Dorsolateral prefrontal cortex (tissue), 120 donors: ENCODE measurements at regions of chr17 and their contacts with region 1.

Region 1: DNA sequence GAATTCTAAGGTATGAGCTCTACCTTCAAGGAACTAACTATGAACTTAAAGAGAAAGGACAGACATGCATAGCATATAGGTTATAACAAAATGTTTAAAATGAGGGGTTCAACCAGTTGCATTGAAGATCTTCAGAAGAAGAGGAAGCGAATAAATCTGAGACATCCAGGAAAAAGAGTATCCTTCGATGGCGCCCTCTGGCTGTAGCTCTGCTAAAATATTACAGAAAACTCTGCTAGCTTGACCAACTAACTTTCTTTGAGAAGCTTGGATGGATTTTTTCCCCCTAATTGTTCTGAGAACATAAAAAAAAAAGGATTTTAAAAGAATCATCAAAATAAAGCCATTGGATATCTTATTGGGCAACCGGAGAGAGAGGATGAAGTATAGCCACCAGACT is 659.9 kb upstream of the SOX9 start:
- DNase-seq: peak in 4 of 10 donors; percentile 5 to 41 (median 27)
- H3K4me3 ChIP-seq: no peak overlapping the region
- H3K27ac ChIP-seq: no peak overlapping the region
- H3K27me3 ChIP-seq: no peaks in the 10 kb centered on the region
- CTCF ChIP-seq: peak in 55 of 56 donors; percentile 29 to 74 (median 52)

Region 2: GRCh38 chr17:71237903-71238538 is 222.9 kb before region 1 on chr17:
- intact Hi-C with region 1: loop called in 1 of 2 experiments (anchors 5 kb)
- DNase-seq: no peak
- H3K4me3 ChIP-seq: no peak overlapping the region
- H3K27ac ChIP-seq: no peak overlapping the region
- H3K27me3 ChIP-seq: no peaks in the 10 kb centered on the region
- CTCF ChIP-seq: peak in 54 of 56 donors; percentile 28 to 76 (median 52)